ENCODE measurements at regions of chr17 and their contacts with region 1.

Region 1: GRCh38 chr17:63434876-63435684 is 11.0 kb downstream of the CYB561 start:
- DNase-seq: no peak
- CTCF ChIP-seq: no peak

Region 2: DNA sequence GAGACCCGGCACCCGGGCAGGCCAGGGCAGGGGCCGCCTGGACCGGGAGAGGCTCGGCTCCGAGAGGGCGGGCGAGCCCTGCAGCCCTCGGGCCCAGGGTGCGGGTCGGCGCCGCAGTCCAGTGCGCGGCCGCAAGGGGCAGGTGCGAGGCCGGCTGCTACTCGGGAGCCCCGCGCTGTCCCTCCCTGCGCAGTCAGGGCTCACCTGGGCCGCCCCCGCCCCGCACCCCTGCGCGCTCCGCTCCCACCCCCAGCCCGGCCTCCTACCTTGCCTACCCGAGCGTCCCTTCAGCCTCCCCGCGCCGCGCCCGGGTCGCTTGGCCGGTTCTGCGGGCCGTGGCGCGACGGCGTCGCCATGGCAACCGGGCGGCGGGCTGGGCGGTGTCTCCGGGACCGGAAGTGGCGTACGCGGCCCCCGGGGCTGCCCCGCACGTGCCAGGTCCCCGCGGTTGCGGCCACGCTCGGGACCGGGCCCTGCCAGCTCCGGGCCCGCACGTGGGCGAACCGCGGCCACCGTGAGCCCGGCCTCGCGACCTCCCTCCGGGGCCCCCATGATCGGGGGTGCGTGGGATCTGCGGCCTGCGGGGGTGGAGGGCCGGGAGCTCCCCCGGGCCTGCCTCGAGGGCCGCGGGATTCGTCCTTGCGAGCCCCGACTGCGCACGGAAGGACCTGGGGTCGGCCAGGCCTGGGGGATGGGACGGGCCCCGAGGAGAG is 11.1 kb after region 1 on chr17 and contains the start of gene CYB561:
- CTCF ChIA-PET with region 1: interaction called, 15 read pairs
- POLR2A ChIA-PET with region 1: no interaction called
- DNase-seq: peak; percentile 90
- CTCF ChIP-seq: peak; percentile 23

Measured in GM10248 (cell line).